ENCODE measurements at regions of chr6 and their contacts with region 1.

Region 1: GRCh38 chr6:79894939-79895338 is 52.4 kb downstream of the ELOVL4 start:
- DNase-seq: no peak
- H3K4me3 ChIP-seq: no peak overlapping the region
- CTCF ChIP-seq: no peak
- POLR2A ChIP-seq: no peak

Region 2: DNA sequence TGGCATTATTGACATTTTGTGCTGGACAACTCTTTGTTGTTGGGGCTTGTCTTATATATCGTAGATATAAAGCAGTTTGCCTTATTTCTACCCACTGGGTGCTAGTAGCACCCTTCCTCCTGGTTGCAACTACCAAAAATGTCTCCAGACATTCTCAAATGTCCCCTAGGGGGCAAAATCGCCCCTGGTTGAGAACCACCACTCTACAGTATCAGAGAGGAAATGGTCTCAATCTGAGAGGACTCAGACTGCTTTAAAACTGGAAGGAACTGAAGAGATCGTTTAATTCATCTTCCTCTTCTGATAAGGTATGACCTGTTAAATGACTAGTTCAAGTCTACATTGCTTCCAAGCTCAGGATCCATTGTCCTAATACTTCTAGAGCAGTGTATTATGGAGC is 248.9 kb before region 1 on chr6:
- intact Hi-C with region 1: loop called (anchors 10 kb)
- DNase-seq: no peak
- H3K4me3 ChIP-seq: no peak overlapping the region
- CTCF ChIP-seq: no peak
- POLR2A ChIP-seq: no peak

Region 3: DNA sequence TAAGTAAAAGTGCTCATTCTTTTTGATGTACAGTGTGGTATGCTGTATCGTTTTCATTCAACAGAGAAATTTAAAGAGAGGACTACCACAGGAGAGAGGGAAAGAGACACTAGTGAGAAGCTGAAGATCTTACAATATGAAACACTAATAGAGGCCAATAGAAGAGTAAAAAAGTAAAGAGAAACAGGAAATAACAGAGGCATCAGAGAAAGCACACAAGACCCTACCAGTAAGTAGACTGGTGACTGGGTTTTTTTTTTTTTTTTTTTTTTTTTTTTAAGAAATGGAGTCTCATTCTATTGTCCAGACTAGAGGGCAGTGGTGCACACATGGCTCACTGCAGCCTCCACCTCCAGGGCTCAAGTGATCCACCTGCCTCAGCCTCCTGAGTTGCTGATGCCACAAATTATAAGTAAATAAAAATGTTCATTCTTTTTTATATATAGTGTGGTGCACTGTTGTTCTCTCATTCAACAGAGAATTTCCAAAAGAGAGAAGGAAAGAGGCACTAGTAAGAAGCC is 33.6 kb after region 1 on chr6:
- intact Hi-C with region 1: no loop called
- DNase-seq: no peak
- H3K4me3 ChIP-seq: no peak overlapping the region
- CTCF ChIP-seq: no peak
- POLR2A ChIP-seq: no peak

Region 4: DNA sequence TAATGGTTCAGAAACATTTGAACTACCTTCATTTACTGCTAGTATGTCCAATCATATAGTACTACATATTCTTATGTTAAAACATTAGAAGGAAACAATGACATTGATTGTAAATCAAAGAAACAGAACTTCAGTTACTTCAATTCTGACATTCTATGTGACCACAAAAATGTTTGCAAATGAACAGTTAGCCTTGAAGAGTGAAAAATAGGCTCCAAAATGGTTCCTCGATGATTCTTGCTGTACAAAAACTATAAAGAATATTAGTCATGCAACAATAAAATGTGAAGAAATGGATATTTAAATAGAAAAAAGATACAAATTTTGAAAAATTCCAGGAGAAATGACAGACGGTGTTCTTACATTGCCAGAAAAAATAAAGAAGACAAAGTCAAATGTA is 898.5 kb after region 1 on chr6:
- intact Hi-C with region 1: no loop called
- DNase-seq: no peak
- H3K4me3 ChIP-seq: no peak overlapping the region
- CTCF ChIP-seq: no peak
- POLR2A ChIP-seq: no peak

Measured in lower leg skin (tissue), 4 donors.